T-cell (primary cell): ENCODE measurements at regions of chr2 and their contacts with region 1.

Region 1: GRCh38 chr2:30956995-30957394 is 149.7 kb upstream of the CAPN13 start:
- DNase-seq: no peak
- ATAC-seq: no peak
- H3K4me3 ChIP-seq: no peak overlapping the region
- H3K4me3 Mint-ChIP-seq: no peak overlapping the region
- H3K27ac ChIP-seq: no peak overlapping the region
- H3K27ac Mint-ChIP-seq: no peak overlapping the region
- H3K4me1 ChIP-seq: no peaks in the 10 kb centered on the region
- H3K4me1 Mint-ChIP-seq: no peaks in the 10 kb centered on the region
- H3K27me3 ChIP-seq: no peaks in the 10 kb centered on the region
- H3K27me3 Mint-ChIP-seq: no peaks in the 10 kb centered on the region

Region 2: DNA sequence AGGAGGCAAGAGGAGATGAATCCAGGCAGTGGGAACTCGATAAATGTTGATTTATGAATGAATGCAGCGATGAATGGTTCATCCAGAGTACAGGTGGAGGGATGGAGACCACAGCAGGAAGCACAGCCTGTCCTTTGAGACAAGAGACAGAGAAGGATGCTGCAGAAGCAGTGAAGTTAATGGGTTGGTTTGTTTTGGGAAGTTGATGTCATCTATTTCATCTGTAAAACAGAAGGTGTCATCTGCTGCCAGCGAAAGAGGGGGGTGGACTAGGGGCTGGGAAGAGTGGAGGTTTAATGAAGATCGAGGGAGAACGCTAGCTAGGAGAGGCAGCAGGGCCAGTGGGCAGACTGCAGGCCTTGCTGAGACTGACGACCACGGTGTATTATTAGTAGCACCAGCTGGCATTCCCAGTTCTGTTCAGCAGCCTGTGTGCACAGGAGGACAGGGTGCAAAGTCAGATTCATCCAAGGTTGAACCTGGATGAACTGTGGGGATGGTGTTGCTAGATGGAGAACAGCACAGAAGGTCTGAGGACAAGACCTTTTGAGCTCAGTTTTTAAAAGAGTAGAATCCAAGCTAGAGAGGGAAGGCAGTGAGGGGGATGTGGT is 29.4 kb before region 1 on chr2:
- CTCF ChIA-PET with region 1: no interaction called
- POLR2A ChIA-PET with region 1: interaction called in 1 of 2 experiments, 10 read pairs
- DNase-seq: no peak
- ATAC-seq: no peak
- H3K4me3 ChIP-seq: no peak overlapping the region
- H3K4me3 Mint-ChIP-seq: no peak overlapping the region
- H3K27ac ChIP-seq: no peak overlapping the region
- H3K27ac Mint-ChIP-seq: no peak overlapping the region
- H3K4me1 ChIP-seq: no peaks in the 10 kb centered on the region
- H3K4me1 Mint-ChIP-seq: no peaks in the 10 kb centered on the region
- H3K27me3 ChIP-seq: peaks cover 0 to 16% of the 10 kb centered on the region in 2 experiments
- H3K27me3 Mint-ChIP-seq: no peaks in the 10 kb centered on the region